Spleen (tissue), 13 donors: ENCODE measurements at regions of chr18 and their contacts with region 1.

Region 1: DNA sequence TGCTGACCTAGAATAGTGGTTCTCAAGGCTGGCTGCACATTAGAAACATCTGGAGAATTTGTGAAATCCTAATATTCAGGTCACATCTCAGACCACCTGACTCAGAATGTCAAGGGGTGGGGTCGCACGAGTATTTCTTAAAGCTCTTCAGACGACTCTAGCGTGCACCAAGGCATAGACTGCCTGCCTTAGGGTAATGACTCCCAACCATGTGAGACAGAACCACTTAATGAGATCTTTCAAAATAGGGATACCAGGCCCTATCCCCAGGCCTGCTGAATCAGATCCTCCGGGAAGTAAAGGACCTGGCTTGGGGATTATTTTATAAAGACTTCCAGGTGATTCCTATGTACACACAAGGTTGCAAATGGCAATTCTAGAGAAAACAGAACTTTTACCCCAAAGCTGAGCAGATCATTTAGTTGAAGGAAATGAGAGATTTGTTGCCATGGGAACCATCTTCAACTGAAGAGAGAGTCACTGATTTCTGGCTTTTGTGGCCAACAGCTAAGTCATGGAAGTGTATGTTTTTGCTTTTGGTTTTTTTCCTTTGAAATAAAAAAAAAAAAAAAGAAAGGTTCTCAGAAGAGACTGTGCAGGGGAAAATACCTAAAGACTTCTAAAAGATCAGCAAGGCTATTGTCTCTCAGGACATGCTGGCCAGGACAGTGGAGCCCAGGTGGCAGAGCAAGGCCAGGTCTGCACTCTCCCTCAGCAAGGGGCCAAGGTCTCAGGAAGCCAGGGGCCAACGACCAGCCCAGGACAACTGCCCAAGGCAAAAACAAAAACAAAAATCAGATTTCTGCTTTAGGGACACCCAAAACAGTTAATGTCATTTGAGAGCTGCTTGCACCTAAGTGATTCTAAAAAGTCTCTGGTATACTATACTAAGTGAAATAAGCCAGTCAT is 15.3 kb upstream of the LOXHD1 start:
- DNase-seq: no peak
- H3K4me3 ChIP-seq: no peak overlapping the region
- H3K27ac ChIP-seq: no peak overlapping the region
- H3K4me1 ChIP-seq: peaks cover 0 to 8% (median 0%) of the 10 kb centered on the region in 6 donors
- H3K27me3 ChIP-seq: peaks cover 0 to 14% (median 0%) of the 10 kb centered on the region in 7 donors
- CTCF ChIP-seq: no peak
- POLR2A ChIP-seq: no peak

Region 2: GRCh38 chr18:46155641-46156051 is 516.7 kb before region 1 on chr18:
- intact Hi-C with region 1: loop called (anchors 5 kb)
- DNase-seq: no peak
- H3K4me3 ChIP-seq: no peak overlapping the region
- H3K27ac ChIP-seq: peak overlapping the region in 3 of 8 donors; percentile 38 to 48 (median 41)
- H3K4me1 ChIP-seq: peaks cover 0 to 23% (median 4%) of the 10 kb centered on the region in 6 donors
- H3K27me3 ChIP-seq: no peaks in the 10 kb centered on the region
- CTCF ChIP-seq: no peak
- POLR2A ChIP-seq: no peak